Pancreas (tissue), 10 donors: ENCODE measurements at regions of chr21 and their contacts with region 1.

Region 1: GRCh38 chr21:26909972-26910371 is 56.9 kb downstream of the ADAMTS5 start:
- DNase-seq: no peak
- ATAC-seq: no peak
- H3K4me3 ChIP-seq: no peak overlapping the region
- H3K27ac ChIP-seq: no peak overlapping the region
- H3K4me1 ChIP-seq: no peaks in the 10 kb centered on the region
- H3K27me3 ChIP-seq: no peaks in the 10 kb centered on the region
- CTCF ChIP-seq: no peak

Region 2: GRCh38 chr21:26967062-26967913 is 57.3 kb after region 1 on chr21 and contains the start of gene ADAMTS5:
- intact Hi-C with region 1: no loop called
- DNase-seq: peak in 5 of 6 donors; percentile 12 to 59 (median 17)
- ATAC-seq: peak; percentile 21 to 45 (median 34)
- H3K4me3 ChIP-seq: peak within 1 kb of the TSS; percentile 13 to 56 (median 28)
- H3K27ac ChIP-seq: no peak within 1 kb of the TSS
- H3K4me1 ChIP-seq: peaks cover 0 to 5% (median 0%) of the 10 kb centered on the region in 3 donors
- H3K27me3 ChIP-seq: peaks cover 0 to 14% (median 4%) of the 10 kb centered on the region in 4 donors
- CTCF ChIP-seq: no peak
- total RNA-seq, gene ADAMTS5: 0.14 to 3.4 (median 0.61) TPM

Region 3: DNA sequence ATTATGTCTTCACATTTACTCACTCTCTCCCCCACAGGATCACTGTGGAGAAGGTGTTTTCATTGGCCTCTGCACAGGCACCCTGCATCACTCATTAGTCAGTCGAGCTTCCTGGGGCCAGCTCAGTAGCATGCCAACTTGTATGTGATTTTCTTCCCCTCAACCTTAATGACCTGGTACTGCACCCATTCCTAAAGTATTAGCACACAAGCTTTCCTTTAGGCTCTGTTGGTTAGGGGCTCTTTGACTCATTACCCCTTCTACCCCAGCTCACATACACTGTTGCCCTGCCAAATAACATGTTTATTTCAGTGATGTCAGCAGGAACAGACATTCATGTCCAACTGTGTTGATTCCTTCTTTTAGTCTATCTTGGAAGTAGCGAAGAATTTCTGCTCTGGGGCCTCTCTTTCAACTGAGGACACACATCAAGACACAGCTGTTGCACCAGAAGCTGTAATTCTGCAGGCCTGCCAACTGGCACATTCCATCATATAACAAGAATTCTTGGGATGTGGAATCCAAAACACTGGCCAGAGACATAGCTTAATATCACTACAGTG is 660.4 kb after region 1 on chr21:
- intact Hi-C with region 1: loop called in 1 of 3 experiments (anchors 10 kb)
- DNase-seq: no peak
- ATAC-seq: peak in 2 of 4 donors; percentile 31 to 53
- H3K4me3 ChIP-seq: no peak overlapping the region
- H3K27ac ChIP-seq: no peak overlapping the region
- H3K4me1 ChIP-seq: no peaks in the 10 kb centered on the region
- H3K27me3 ChIP-seq: no peaks in the 10 kb centered on the region
- CTCF ChIP-seq: no peak